Mammary epithelial cell (primary cell): ENCODE measurements at regions of chr4 and their contacts with region 1.

Region 1: GRCh38 chr4:99405433-99406115 is 29.6 kb downstream of the ADH7 start:
- DNase-seq: peak; percentile 66
- H3K4me3 ChIP-seq: no peak overlapping the region
- H3K27ac ChIP-seq: peak overlapping the region; percentile 88
- H3K4me1 ChIP-seq: peaks cover 17% of the 10 kb centered on the region
- H3K27me3 ChIP-seq: no peaks in the 10 kb centered on the region
- CTCF ChIP-seq: peak; percentile 92 to 94

Region 2: DNA sequence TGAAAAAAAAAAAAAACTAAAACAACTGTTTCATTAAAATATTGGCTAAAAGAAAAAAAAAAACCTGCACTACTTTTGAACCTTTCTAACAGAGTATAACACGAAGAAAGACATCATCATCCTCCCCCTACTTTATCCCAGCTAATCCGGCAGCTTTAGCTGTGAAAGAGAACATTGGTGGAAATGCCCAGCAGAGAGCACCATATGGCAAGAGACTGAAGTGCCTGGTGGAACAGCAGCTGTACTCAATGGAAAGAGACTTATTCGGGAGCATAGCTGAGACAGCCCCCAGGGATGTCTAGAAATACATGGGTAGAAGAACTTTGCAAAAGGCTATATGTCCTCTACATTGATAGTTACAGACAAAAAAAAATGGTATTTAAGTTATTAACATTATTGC is 1292.6 kb before region 1 on chr4:
- CTCF ChIA-PET with region 1: no interaction called
- dilution Hi-C with region 1: no loop called
- in situ Hi-C with region 1: no loop called
- intact Hi-C with region 1: loop called (anchors 10 kb)
- DNase-seq: peak; percentile 17
- H3K4me3 ChIP-seq: no peak overlapping the region
- H3K27ac ChIP-seq: no peak overlapping the region
- H3K4me1 ChIP-seq: no peaks in the 10 kb centered on the region
- H3K27me3 ChIP-seq: peaks cover 3% of the 10 kb centered on the region
- CTCF ChIP-seq: peak; percentile 42 to 56

Region 3: DNA sequence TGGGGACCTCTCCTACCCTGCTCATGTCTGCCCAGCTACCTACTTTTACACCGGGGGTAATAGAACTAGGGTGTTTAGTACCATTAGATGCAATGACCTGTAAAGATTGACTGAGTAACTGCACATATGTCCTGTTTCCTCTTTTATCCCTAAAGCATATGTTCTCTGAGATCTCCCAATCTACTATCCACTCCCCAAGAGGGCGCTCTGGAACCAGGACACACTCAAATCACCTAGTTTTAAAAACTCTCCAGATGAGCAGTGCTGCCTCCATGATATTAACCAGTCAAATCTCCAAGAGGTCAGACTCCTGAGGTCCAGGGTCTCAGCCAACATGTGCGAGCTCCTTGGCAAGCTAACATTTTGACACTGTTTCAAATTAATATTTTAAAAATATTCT is 660.2 kb before region 1 on chr4:
- CTCF ChIA-PET with region 1: no interaction called
- dilution Hi-C with region 1: no loop called
- in situ Hi-C with region 1: no loop called
- intact Hi-C with region 1: loop called (anchors 5 kb)
- DNase-seq: peak; percentile 32
- H3K4me3 ChIP-seq: no peak overlapping the region
- H3K27ac ChIP-seq: no peak overlapping the region
- H3K4me1 ChIP-seq: no peaks in the 10 kb centered on the region
- H3K27me3 ChIP-seq: no peaks in the 10 kb centered on the region
- CTCF ChIP-seq: peak; percentile 19 to 63

Region 4: GRCh38 chr4:98995183-98996055 is 410.2 kb before region 1 on chr4 and contains the start of gene METAP1:
- CTCF ChIA-PET with region 1: interaction called, 3 read pairs
- dilution Hi-C with region 1: no loop called
- in situ Hi-C with region 1: no loop called
- intact Hi-C with region 1: loop called (anchors 1 kb)
- DNase-seq: peak; percentile 97
- H3K4me3 ChIP-seq: peak within 1 kb of the TSS; percentile 94 to 98 (median 97)
- H3K27ac ChIP-seq: peak within 1 kb of the TSS; percentile 81
- H3K4me1 ChIP-seq: peaks cover 27% of the 10 kb centered on the region
- H3K27me3 ChIP-seq: no peaks in the 10 kb centered on the region
- CTCF ChIP-seq: peak; percentile 34 to 79
- total RNA-seq, gene METAP1: 67.7 to 72.7 TPM

Region 5: GRCh38 chr4:99117876-99118693 is 287.5 kb before region 1 on chr4:
- CTCF ChIA-PET with region 1: no interaction called
- dilution Hi-C with region 1: no loop called
- in situ Hi-C with region 1: loop called (anchors 25 kb)
- intact Hi-C with region 1: loop called (anchors 1 kb)
- DNase-seq: no peak
- H3K4me3 ChIP-seq: no peak overlapping the region
- H3K27ac ChIP-seq: no peak overlapping the region
- H3K4me1 ChIP-seq: no peaks in the 10 kb centered on the region
- H3K27me3 ChIP-seq: no peaks in the 10 kb centered on the region
- CTCF ChIP-seq: peak in 1 of 2 donors; percentile 25

Region 6: DNA sequence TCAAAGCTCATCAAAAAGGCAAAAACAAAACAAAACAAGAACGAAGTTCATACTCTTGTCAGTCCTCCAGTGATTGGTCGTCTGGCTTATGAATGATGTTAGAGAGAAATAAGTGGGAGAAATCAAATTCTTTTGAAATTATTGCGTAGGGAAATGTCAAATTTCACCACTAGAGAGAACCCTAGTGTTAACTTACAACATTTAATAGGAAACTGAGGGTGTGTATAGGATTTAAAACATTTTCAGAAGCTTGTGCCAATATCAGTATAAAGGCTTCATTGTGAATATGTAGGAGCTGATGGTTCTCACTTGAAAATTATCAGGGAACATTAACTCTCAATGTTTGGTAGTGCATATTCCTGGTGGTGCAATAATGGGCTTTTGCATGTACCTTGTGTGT is 203.9 kb before region 1 on chr4:
- CTCF ChIA-PET with region 1: no interaction called
- dilution Hi-C with region 1: no loop called
- in situ Hi-C with region 1: no loop called
- intact Hi-C with region 1: loop called (anchors 1 kb)
- DNase-seq: no peak
- H3K4me3 ChIP-seq: no peak overlapping the region
- H3K27ac ChIP-seq: no peak overlapping the region
- H3K4me1 ChIP-seq: no peaks in the 10 kb centered on the region
- H3K27me3 ChIP-seq: no peaks in the 10 kb centered on the region
- CTCF ChIP-seq: peak in 1 of 2 donors; percentile 20